Activated naive CD4-positive, alpha-beta T cell treated with anti-CD3 and anti-CD28 coated beads, Interleukin-2, amount 10 ng/mL, durations not matched to agents 7 days and 5 days (primary cell): ENCODE measurements at regions of chr15 and their contacts with region 1.

Region 1: DNA sequence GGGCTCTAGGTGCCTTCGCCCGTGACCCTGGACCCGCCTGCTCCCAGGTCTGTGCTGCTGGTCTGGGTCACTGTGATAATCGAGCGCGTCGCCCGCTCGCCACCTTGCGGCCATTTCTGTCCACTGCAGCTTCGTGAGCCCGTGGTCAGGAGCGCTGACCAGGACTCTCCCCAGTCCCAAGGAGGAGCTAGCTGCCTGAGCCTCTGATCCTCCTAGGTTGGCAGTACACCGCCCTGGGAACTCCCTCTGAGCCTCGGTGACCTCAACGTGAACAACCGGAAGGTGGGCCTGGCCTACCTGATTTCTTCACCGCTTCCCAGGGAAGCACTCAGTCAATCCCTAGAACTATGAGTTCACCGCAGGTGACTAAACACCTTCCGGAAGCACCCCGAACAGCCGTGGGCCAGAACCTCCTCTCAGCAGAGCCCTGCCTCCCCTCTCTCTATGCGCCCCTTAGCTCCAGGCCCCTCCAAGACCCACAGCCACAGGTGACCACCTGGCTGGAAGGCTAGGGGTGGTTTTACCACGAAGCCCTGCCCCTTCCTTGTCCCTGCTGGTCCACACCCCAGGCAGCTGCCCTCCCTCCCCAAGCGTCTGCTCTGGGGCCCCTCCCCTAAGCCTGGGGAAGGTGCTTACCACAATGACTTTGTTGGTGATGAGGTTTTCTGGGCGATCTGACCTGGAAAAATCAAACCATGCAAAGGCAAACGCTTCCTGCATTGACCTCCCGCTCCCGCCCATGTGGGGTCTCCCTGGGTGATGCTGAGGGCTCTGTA is 9.7 kb downstream of the PLA2G4D start:
- DNase-seq: peak; percentile 55
- H3K4me3 Mint-ChIP-seq: no peak overlapping the region
- H3K27ac Mint-ChIP-seq: no peak overlapping the region
- H3K4me1 Mint-ChIP-seq: peaks cover 7% of the 10 kb centered on the region
- H3K27me3 Mint-ChIP-seq: peaks cover 54% of the 10 kb centered on the region

Region 2: GRCh38 chr15:41894791-41895463 is 189.7 kb before region 1 on chr15:
- CTCF ChIA-PET with region 1: no interaction called
- DNase-seq: peak; percentile 91
- H3K4me3 Mint-ChIP-seq: peak overlapping the region; percentile 56
- H3K27ac Mint-ChIP-seq: peak overlapping the region; percentile 96
- H3K4me1 Mint-ChIP-seq: peaks cover 70% of the 10 kb centered on the region
- H3K27me3 Mint-ChIP-seq: no peaks in the 10 kb centered on the region

Region 3: DNA sequence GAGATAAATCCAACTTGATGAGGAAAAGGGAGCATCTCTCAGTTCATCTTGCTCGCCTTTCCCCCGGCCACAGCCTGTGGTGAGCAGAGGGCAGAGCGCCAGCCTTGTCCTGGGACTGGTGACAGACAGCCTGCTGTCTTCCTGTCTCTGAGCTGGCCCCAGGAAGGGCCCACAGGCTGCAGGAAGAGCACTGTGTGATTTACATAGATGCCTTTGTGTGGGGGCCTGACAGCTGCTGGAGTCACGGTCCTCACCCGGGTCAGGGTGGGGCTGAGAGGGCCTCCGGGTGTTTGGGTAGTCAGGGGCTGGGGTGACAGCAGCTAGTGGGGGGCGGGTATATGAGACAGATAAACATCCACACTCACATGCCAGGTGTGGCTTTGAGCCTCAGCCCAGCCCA is 19.6 kb before region 1 on chr15:
- CTCF ChIA-PET with region 1: interaction called, 15 read pairs
- DNase-seq: no peak
- H3K4me3 Mint-ChIP-seq: no peak overlapping the region
- H3K27ac Mint-ChIP-seq: no peak overlapping the region
- H3K4me1 Mint-ChIP-seq: peaks cover 5% of the 10 kb centered on the region
- H3K27me3 Mint-ChIP-seq: peaks cover 48% of the 10 kb centered on the region

Region 4: GRCh38 chr15:42072141-42072685 is 12.4 kb before region 1 on chr15:
- CTCF ChIA-PET with region 1: interaction called, 15 read pairs
- DNase-seq: no peak
- H3K4me3 Mint-ChIP-seq: no peak overlapping the region
- H3K27ac Mint-ChIP-seq: no peak overlapping the region
- H3K4me1 Mint-ChIP-seq: no peaks in the 10 kb centered on the region
- H3K27me3 Mint-ChIP-seq: peaks cover 13% of the 10 kb centered on the region

Region 5: DNA sequence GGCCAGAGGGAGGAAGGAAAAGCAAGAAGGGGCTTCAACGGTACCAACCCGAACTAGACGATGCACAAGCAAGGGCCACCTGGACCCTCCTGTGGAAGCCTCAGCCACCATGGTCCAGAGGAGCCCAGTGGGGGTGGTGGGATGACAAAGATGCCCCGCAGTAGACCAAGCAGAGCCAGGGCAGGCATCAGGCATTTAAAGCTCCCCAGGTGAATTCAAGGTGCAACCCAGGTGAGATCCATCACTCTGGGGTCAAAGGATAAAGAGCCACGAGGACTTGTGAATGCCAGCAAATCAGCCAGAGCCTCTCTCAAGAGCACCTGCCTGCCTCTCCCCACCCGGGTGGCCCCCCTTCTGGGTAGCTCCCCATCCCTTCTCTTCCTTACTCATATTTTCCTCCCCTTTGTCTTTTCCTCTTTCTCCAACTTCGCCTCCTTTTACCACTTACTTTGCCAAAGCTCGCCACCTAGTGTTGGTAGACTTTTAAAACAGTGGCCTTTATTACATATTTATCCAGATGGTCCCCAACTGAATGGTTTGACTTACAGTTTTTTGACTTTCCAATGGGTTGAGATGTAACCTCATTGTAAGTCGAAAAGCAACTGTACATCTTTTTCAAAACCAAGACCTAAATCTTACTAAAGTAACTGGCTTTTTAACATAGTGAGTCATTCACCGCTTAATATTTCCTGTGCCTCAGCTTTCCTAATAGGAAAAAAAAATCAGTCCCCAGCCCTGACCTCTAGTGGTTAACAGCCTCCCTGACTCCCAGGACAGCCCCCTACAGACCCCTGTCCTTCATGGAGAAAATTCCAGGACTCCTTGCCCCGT is 53.0 kb after region 1 on chr15:
- CTCF ChIA-PET with region 1: interaction called, 74 read pairs
- DNase-seq: peak; percentile 22
- H3K4me3 Mint-ChIP-seq: no peak overlapping the region
- H3K27ac Mint-ChIP-seq: no peak overlapping the region
- H3K4me1 Mint-ChIP-seq: peaks cover 3% of the 10 kb centered on the region
- H3K27me3 Mint-ChIP-seq: peaks cover 37% of the 10 kb centered on the region